Activated T-helper 2 cell treated with anti-CD3 and anti-CD28 coated beads, Interferon-gamma antibody, Interleukin-2, Interleukin-4, amounts not matched to agents 10 μg/mL and 5 μg/mL and 100 μg/mL, durations not matched to agents 14 hours and 24 hours and 36 hours (primary cell): ENCODE measurements at regions of chr7 and their contacts with region 1.

Region 1: GRCh38 chr7:44980393-44981034 is 1.7 kb upstream of the MYO1G start:
- DNase-seq: peak; percentile 56
- H3K4me3 Mint-ChIP-seq: peak overlapping the region; percentile 97
- H3K27ac Mint-ChIP-seq: peak overlapping the region; percentile 98
- H3K4me1 Mint-ChIP-seq: peaks cover 63% of the 10 kb centered on the region
- H3K27me3 Mint-ChIP-seq: no peaks in the 10 kb centered on the region

Region 2: GRCh38 chr7:45026984-45027773 is 46.7 kb after region 1 on chr7:
- intact Hi-C with region 1: loop called (anchors 1 kb)
- DNase-seq: peak; percentile 29
- H3K4me3 Mint-ChIP-seq: peak overlapping the region; percentile 84
- H3K27ac Mint-ChIP-seq: peak overlapping the region; percentile 83
- H3K4me1 Mint-ChIP-seq: peaks cover 65% of the 10 kb centered on the region
- H3K27me3 Mint-ChIP-seq: no peaks in the 10 kb centered on the region

Region 3: DNA sequence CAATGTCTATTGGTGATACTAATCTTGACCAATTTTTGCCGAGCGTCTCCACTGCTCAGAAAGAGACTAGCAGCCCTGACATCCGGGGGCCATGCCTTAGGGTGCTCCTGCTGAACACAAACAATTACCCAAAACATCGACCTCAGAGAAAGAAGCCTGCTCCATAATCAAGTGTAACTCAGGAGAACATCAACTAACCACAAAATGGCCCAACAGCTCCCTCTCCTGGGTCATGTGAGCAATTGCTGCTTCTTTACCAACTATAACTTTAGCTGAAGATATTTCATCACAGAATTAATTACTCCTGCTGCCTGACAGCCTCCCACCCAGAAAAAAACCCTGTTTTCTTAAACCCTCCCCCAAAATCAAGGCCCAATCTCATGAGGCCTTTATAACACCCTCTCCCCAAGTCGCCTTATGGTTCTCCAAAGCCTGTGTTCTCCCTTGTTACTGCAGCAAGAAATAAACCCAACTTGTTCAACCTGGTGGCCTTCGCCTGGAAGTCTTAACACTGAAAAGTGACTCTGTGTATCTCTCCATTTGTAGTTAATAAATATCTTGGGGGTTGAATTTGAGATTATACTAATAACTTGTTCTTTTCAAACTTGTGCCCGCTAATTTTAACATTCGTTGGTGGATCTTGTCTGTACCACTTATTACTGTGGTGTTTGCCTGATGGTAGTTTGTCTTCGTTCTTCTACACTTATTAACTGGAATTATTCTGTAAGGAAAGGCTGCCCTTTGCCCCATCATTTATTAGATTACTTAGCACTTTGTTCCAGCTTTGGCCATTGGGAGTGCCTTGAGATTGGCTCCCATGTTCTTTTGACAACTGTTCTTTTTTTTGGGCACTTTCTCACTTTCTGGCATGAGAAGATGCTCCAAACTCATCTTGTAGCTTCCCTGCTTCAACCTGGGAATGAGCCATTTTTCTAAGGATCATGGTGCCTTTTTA is 155.9 kb after region 1 on chr7:
- intact Hi-C with region 1: loop called (anchors 2 kb)
- DNase-seq: peak; percentile 52
- H3K4me3 Mint-ChIP-seq: no peak overlapping the region
- H3K27ac Mint-ChIP-seq: no peak overlapping the region
- H3K4me1 Mint-ChIP-seq: peaks cover 16% of the 10 kb centered on the region
- H3K27me3 Mint-ChIP-seq: peaks cover 15% of the 10 kb centered on the region